ENCODE measurements at regions of chr17 and their contacts with region 1.

Region 1: DNA sequence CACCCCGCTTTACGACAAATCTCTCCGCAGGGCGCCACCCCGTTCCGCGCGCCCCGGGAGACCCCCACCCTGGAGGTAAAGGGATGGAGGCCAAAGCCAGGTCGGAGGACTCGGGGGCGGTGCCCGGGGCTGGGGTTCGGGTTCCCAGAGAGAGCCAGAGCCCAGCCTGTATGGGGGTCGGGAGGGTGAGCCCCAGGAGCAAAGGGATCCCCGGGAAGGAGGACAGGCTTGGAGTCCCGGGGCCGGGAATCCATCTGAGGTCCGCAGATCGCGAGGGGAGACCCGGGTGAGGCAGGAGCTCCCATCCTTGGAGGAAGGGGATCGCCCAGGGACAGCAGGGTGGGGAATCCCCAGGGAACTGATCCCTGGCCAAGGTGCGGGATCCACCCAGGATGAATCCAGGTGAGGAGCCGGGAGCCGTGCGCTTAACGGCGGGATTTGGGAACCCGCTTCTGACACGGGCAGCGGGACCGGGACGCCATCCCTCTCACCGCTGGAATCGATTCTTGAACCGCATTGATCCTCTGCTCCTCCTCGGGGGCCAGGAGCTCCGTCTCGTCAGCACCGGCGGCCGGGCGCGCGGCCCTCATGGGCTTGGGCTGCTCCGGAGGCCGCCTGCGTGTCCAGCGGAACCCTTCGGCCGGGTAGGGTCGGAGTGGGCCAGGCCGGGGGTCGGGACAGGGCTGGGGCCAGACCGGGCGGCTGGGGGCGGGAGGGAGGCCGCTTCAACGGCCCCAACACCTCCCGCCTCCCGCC is at the start of gene MMD:
- DNase-seq: no peak
- ATAC-seq: no peak
- H3K4me3 ChIP-seq: peak within 1 kb of the TSS; percentile 68 to 97 (median 93)
- H3K4me3 Mint-ChIP-seq: peak within 1 kb of the TSS; percentile 93
- H3K27ac ChIP-seq: peak within 1 kb of the TSS; percentile 93 to 95
- H3K27ac Mint-ChIP-seq: peak within 1 kb of the TSS; percentile 96
- H3K4me1 ChIP-seq: peaks cover 47 to 59% of the 10 kb centered on the region in 2 donors
- H3K4me1 Mint-ChIP-seq: peaks cover 66% of the 10 kb centered on the region
- H3K27me3 ChIP-seq: no peaks in the 10 kb centered on the region
- H3K27me3 Mint-ChIP-seq: no peaks in the 10 kb centered on the region
- CTCF ChIP-seq: no peak
- total RNA-seq, gene MMD: 26.4 and 29.4 TPM in 2 replicates

Region 2: DNA sequence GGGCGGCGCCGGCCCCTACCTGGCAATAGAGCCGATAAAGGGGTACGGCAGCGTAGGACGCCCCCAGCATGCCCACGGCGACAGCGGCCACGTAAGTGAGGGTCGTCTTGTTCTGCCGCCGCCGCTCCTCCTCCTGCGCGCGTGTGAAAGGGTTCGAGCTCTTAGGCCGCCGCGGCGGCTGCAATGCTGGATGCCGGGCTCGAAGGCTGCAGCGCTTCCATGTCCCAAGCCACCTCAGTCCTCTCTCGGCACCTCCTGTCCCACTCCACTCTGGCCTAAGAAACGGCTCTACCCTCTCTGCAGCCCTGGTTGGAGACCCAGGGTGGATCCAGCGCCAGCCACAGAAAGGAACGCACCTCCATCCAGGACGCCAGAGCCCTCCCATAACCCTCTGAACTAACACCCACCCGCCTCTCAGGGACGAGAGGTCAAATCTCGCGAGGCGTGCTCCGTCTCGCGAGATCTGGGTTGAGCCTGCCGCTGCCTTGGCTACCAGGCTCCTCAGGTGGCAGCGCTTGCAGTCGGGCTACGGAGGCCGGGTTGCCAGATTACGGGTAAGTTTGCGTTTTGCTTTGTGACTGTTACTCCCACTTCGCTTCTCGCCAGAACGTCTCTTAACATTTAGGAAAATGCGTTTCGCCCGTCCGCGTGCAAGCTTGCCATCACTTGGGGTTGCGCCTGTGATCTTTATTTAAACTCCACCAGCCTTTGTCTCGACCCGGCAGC is 452.9 kb before region 1 on chr17 and contains the starts of genes COX11 and STXBP4:
- CTCF ChIA-PET with region 1: no interaction called
- POLR2A ChIA-PET with region 1: no interaction called
- intact Hi-C with region 1: loop called (anchors 2 kb)
- DNase-seq: peak; percentile 98
- ATAC-seq: peak; percentile 96
- H3K4me3 ChIP-seq: peak within 1 kb of the TSS; percentile 69 to 96 (median 91)
- H3K4me3 Mint-ChIP-seq: no peak within 1 kb of the TSS
- H3K27ac ChIP-seq: peak within 1 kb of the TSS; percentile 47 to 80
- H3K27ac Mint-ChIP-seq: no peak within 1 kb of the TSS
- H3K4me1 ChIP-seq: peaks cover 8 to 21% of the 10 kb centered on the region in 2 donors
- H3K4me1 Mint-ChIP-seq: peaks cover 26% of the 10 kb centered on the region
- H3K27me3 ChIP-seq: no peaks in the 10 kb centered on the region
- H3K27me3 Mint-ChIP-seq: no peaks in the 10 kb centered on the region
- CTCF ChIP-seq: peak; percentile 12
- total RNA-seq, gene COX11: 54.9 and 63.7 TPM in 2 replicates
- total RNA-seq, gene STXBP4: 11.4 and 12.3 TPM in 2 replicates

Region 3: GRCh38 chr17:55264645-55265298 is 156.6 kb before region 1 on chr17 and contains the start of gene HLF:
- CTCF ChIA-PET with region 1: no interaction called
- POLR2A ChIA-PET with region 1: no interaction called
- intact Hi-C with region 1: loop called (anchors 5 kb)
- DNase-seq: peak; percentile 81
- ATAC-seq: peak; percentile 93
- H3K4me3 ChIP-seq: peak within 1 kb of the TSS in 3 of 5 experiments; percentile 23 to 47 (median 38)
- H3K4me3 Mint-ChIP-seq: peak within 1 kb of the TSS; percentile 82
- H3K27ac ChIP-seq: no peak within 1 kb of the TSS
- H3K27ac Mint-ChIP-seq: no peak within 1 kb of the TSS
- H3K4me1 ChIP-seq: peaks cover 27 to 29% of the 10 kb centered on the region in 2 donors
- H3K4me1 Mint-ChIP-seq: peaks cover 25% of the 10 kb centered on the region
- H3K27me3 ChIP-seq: peaks cover 2 to 71% (median 54%) of the 10 kb centered on the region in 4 experiments
- H3K27me3 Mint-ChIP-seq: peaks cover 77% of the 10 kb centered on the region
- CTCF ChIP-seq: no peak
- total RNA-seq, gene HLF: not detected in 2 replicates

Region 4: DNA sequence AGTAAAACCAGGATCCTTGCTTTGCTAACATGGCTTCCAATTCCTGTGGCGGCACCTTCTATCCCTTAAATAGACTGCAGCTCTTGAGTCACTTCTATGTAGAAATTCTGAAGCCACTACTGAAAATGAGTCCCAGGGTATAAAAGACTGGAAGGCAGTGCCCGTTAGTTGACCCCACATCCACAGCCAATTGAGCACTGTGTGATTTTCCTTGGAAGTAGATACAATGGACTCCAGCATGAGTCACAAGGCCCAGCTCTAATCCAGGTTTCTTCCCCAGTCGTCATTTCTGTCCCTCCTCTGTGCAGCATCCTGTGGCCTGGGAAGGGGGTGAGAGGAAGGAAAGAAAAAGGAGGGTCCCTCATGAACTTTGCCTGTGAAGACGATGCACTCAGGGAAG is 87.1 kb before region 1 on chr17:
- CTCF ChIA-PET with region 1: no interaction called
- POLR2A ChIA-PET with region 1: no interaction called
- intact Hi-C with region 1: no loop called
- DNase-seq: no peak
- ATAC-seq: no peak
- H3K4me3 ChIP-seq: no peak overlapping the region
- H3K4me3 Mint-ChIP-seq: no peak overlapping the region
- H3K27ac ChIP-seq: no peak overlapping the region
- H3K27ac Mint-ChIP-seq: no peak overlapping the region
- H3K4me1 ChIP-seq: no peaks in the 10 kb centered on the region
- H3K4me1 Mint-ChIP-seq: no peaks in the 10 kb centered on the region
- H3K27me3 ChIP-seq: no peaks in the 10 kb centered on the region
- H3K27me3 Mint-ChIP-seq: peaks cover 21% of the 10 kb centered on the region
- CTCF ChIP-seq: no peak

Region 5: DNA sequence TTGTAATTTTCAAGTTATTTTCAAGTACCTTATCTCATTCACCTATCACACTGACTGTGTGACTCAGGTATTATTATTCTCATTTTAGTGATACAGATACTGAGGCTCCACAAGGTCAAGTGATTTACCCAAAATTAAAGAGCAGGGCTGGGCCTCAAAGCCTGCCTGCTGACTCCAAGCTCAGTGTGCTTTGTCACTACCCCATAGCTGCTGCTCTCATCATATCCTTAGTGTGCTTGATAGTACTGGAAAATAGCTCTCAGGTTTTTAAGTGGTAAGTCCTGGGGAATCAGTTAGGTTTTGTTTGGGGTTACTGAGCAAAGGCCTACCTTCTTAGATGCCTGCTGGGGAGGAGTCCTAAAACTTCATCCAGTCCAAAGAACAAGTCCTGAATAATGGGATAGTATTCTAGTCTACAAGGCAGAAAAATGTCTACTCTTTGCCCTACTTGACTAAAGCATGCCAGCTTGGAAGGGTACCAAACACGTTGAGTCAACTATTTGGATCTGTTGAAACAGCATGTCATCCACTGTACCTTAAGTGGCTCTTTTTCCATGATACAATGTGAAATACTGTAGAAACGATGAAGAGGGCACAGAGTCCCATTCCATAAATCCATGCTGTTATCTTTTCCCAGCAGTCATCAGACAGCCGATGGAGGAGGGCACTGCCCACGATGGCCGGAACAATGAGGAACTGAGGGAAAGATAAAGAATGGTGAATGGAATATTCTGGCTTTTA is 10.5 kb before region 1 on chr17:
- CTCF ChIA-PET with region 1: interaction called, 3 read pairs
- POLR2A ChIA-PET with region 1: no interaction called
- intact Hi-C with region 1: loop called (anchors 1 kb)
- DNase-seq: no peak
- ATAC-seq: no peak
- H3K4me3 ChIP-seq: no peak overlapping the region
- H3K4me3 Mint-ChIP-seq: no peak overlapping the region
- H3K27ac ChIP-seq: no peak overlapping the region
- H3K27ac Mint-ChIP-seq: no peak overlapping the region
- H3K4me1 ChIP-seq: no peaks in the 10 kb centered on the region
- H3K4me1 Mint-ChIP-seq: peaks cover 9% of the 10 kb centered on the region
- H3K27me3 ChIP-seq: no peaks in the 10 kb centered on the region
- H3K27me3 Mint-ChIP-seq: no peaks in the 10 kb centered on the region
- CTCF ChIP-seq: no peak

Region 6: DNA sequence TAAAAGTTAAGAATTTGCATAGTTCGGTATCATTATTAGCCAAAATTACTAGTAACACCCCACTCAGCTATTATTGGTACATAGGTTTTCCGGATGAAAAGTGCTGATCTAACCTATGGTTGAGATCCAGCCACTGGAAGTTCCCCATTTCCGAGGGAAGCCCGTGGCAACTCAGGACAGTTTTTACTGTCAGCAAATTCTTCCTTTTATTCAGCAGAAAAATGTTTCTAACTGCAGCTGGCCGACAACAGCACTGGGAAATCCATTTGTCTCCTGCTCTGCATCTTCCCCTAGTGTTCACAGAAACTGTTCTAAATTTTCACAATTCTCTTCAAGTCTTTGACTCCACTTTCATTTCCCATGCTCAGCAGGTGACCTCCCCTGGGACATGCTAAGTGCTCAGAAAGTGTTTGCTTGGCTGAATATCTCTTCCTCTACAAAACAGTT is 15.8 kb after region 1 on chr17:
- CTCF ChIA-PET with region 1: interaction called, 16 read pairs
- POLR2A ChIA-PET with region 1: interaction called, 11 read pairs
- intact Hi-C with region 1: loop called (anchors 1 kb)
- DNase-seq: peak; percentile 90
- ATAC-seq: peak; percentile 95
- H3K4me3 ChIP-seq: peak overlapping the region in 4 of 5 experiments; percentile 12 to 36 (median 26)
- H3K4me3 Mint-ChIP-seq: peak overlapping the region; percentile 52
- H3K27ac ChIP-seq: peak overlapping the region; percentile 60 to 64
- H3K27ac Mint-ChIP-seq: peak overlapping the region; percentile 76
- H3K4me1 ChIP-seq: peaks cover 20 to 22% of the 10 kb centered on the region in 2 donors
- H3K4me1 Mint-ChIP-seq: peaks cover 40% of the 10 kb centered on the region
- H3K27me3 ChIP-seq: peaks cover 0 to 13% (median 4%) of the 10 kb centered on the region in 4 experiments
- H3K27me3 Mint-ChIP-seq: no peaks in the 10 kb centered on the region
- CTCF ChIP-seq: peak; percentile 33

Region 7: GRCh38 chr17:55513885-55514591 is 92.7 kb after region 1 on chr17:
- CTCF ChIA-PET with region 1: no interaction called
- POLR2A ChIA-PET with region 1: no interaction called
- intact Hi-C with region 1: loop called (anchors 5 kb)
- DNase-seq: peak; percentile 81
- ATAC-seq: peak; percentile 49
- H3K4me3 ChIP-seq: no peak overlapping the region
- H3K4me3 Mint-ChIP-seq: no peak overlapping the region
- H3K27ac ChIP-seq: no peak overlapping the region
- H3K27ac Mint-ChIP-seq: no peak overlapping the region
- H3K4me1 ChIP-seq: peaks cover 0 to 2% of the 10 kb centered on the region in 2 donors
- H3K4me1 Mint-ChIP-seq: peaks cover 5% of the 10 kb centered on the region
- H3K27me3 ChIP-seq: no peaks in the 10 kb centered on the region
- H3K27me3 Mint-ChIP-seq: peaks cover 7% of the 10 kb centered on the region
- CTCF ChIP-seq: peak; percentile 96

Region 8: DNA sequence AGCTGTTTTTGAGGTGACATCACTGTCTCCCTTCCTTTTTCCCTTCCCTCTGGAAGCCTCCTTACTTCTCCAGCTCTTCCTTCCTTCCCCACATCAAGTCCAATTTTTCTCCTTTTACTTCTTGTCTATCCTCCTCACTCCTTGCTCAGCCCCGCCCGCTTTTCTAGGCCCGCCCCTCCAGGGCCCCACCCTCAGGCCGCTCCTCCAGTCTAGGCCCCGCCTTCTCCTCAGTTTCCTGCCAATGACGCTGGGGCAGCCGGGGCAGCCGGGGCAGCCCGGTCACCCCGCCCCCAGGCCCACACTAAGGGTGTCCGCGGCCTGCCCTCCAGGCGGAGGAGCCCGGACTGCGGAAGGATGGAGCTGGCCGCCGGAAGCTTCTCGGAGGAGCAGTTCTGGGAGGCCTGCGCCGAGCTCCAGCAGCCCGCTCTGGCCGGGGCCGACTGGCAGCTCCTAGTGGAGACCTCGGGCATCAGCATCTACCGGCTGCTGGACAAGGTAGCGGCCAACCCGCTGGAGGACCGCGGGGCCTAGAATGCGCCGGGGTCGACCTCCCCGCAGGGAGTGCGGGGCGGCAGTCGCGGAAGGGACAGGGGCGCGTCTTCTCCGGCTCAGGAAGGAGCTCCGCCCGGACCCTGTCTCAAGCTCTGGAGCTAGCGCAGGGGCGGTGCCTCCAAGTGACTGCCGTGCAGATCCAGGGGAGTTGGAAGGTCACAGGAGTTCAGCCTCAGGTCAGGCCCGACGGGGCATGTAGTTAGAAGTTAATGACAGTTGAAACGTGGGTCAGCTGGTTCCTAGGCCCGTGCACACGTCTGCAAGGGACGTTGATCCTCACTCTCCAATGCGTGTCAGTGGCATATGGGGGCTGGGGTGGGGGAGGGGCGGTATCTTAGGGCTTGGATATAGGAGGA is 329.6 kb after region 1 on chr17 and contains the start of gene PCTP:
- CTCF ChIA-PET with region 1: no interaction called
- POLR2A ChIA-PET with region 1: no interaction called
- intact Hi-C with region 1: loop called (anchors 2 kb)
- DNase-seq: peak; percentile 84
- ATAC-seq: peak; percentile 98
- H3K4me3 ChIP-seq: peak within 1 kb of the TSS; percentile 40 to 93 (median 77)
- H3K4me3 Mint-ChIP-seq: peak within 1 kb of the TSS; percentile 84
- H3K27ac ChIP-seq: peak within 1 kb of the TSS; percentile 24 to 33
- H3K27ac Mint-ChIP-seq: peak within 1 kb of the TSS; percentile 22
- H3K4me1 ChIP-seq: peaks cover 5 to 11% of the 10 kb centered on the region in 2 donors
- H3K4me1 Mint-ChIP-seq: peaks cover 14% of the 10 kb centered on the region
- H3K27me3 ChIP-seq: peaks cover 0 to 4% (median 2%) of the 10 kb centered on the region in 4 experiments
- H3K27me3 Mint-ChIP-seq: peaks cover 23% of the 10 kb centered on the region
- CTCF ChIP-seq: peak; percentile 52
- total RNA-seq, gene PCTP: 6.4 and 9.0 TPM in 2 replicates

Measured in B cell (primary cell).